AG04449 (cell line): ENCODE measurements at regions of chr13 and their contacts with region 1.

Region 1: GRCh38 chr13:80342471-80343380 is 1.8 kb upstream of the SPRY2 start:
- DNase-seq: no peak
- H3K4me3 ChIP-seq: peak overlapping the region; percentile 91
- CTCF ChIP-seq: peak; percentile 94

Region 2: DNA sequence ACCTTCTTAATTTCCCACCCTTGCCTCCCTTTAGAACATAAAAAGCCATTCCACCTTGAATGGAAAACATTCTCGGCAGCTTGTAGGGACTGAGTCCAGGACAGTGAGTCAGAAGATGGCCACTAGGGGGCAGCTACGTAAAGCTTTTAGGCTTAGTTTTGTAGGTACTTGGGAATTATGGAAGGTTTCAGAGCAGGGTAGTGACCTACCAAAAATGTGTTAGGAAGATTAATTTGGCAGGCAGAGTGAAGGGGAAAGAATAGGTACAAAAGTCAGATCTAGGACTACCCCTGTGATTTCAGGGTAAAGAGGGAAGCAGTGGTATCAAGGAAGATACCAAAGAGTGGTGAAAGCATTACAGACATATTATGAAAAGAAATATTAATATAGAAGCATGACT is 663.4 kb before region 1 on chr13:
- CTCF ChIA-PET with region 1: interaction called, 27 read pairs
- POLR2A ChIA-PET with region 1: interaction called, 4 read pairs
- DNase-seq: no peak
- H3K4me3 ChIP-seq: no peak overlapping the region
- CTCF ChIP-seq: peak; percentile 67

Region 3: DNA sequence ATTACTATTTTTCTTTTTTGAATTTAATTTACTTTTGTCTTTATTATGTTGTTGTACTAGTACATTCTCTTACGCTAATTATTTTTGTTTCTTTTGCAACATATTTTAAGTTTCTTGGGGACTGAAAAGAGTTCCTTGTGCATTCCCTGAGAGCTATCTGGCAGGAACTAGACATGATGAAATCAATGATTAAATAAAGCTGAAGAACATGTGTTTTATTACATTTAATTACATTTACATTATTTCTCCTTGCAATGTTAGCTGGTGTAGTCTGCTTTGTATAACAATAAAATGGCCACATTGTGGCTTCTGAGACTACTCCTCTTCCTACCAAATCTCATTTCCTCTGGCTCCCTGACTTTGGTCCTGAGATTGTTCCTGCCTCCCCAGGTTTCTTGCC is 616.9 kb before region 1 on chr13:
- CTCF ChIA-PET with region 1: no interaction called
- POLR2A ChIA-PET with region 1: no interaction called
- DNase-seq: no peak
- H3K4me3 ChIP-seq: no peak overlapping the region
- CTCF ChIP-seq: no peak

Region 4: GRCh38 chr13:79775830-79776229 is 566.9 kb before region 1 on chr13:
- CTCF ChIA-PET with region 1: interaction called, 30 read pairs
- POLR2A ChIA-PET with region 1: no interaction called
- DNase-seq: no peak
- H3K4me3 ChIP-seq: no peak overlapping the region
- CTCF ChIP-seq: peak; percentile 55

Region 5: DNA sequence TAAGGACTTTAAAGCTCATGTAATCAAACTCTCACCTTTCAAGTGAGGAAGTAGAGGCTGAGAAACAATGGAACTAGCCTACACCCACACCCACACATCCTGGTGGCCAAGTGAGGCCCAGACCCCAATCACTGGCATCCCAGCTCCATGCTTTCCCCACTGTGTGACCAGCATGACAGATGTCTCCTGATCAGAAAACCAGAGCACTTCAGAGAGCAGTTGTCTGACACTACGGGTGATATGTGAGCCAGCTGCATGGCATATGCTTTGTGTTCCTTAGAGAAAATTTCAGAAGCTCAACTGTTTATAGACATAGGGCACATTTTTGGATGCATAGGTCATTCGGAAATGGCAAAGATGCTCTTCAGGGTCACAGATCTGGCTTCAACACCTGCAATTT is 546.6 kb before region 1 on chr13:
- CTCF ChIA-PET with region 1: interaction called, 10 read pairs
- POLR2A ChIA-PET with region 1: no interaction called
- DNase-seq: no peak
- H3K4me3 ChIP-seq: no peak overlapping the region
- CTCF ChIP-seq: no peak

Region 6: DNA sequence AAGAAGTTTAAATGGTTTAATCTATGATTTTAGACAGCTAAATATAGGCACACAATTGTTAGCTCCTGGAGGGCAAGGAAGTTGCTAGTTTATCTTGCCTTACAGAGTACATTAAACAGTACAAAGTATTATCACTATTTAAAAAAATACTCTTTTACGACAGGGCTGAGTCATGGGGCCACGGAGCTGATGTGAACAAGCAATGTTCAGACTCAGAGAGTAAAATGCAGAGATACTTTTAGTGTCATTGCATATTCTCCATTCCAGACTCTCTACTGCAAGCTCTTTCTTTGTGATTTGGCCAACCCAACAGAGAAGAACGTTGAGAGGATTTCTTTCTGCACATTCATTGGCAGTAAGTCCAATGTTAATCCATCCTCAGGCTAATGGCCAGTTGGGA is 354.2 kb before region 1 on chr13:
- CTCF ChIA-PET with region 1: interaction called, 10 read pairs
- POLR2A ChIA-PET with region 1: interaction called, 13 read pairs
- DNase-seq: peak; percentile 71
- H3K4me3 ChIP-seq: no peak overlapping the region
- CTCF ChIP-seq: no peak

Region 7: GRCh38 chr13:80048802-80049201 is 293.9 kb before region 1 on chr13:
- CTCF ChIA-PET with region 1: interaction called, 14 read pairs
- POLR2A ChIA-PET with region 1: interaction called, 12 read pairs
- DNase-seq: peak; percentile 91
- H3K4me3 ChIP-seq: no peak overlapping the region
- CTCF ChIP-seq: no peak

Region 8: GRCh38 chr13:80116107-80116506 is 226.6 kb before region 1 on chr13:
- CTCF ChIA-PET with region 1: interaction called, 10 read pairs
- POLR2A ChIA-PET with region 1: no interaction called
- DNase-seq: peak; percentile 45
- H3K4me3 ChIP-seq: no peak overlapping the region
- CTCF ChIP-seq: no peak